ENCODE measurements at regions of chr20 and their contacts with region 1.

Region 1: GRCh38 chr20:3051385-3052019 is 5.7 kb downstream of the MRPS26 start:
- DNase-seq: no peak

Region 2: GRCh38 chr20:2697768-2698167 is 353.7 kb before region 1 on chr20:
- intact Hi-C with region 1: no loop called
- DNase-seq: no peak

Region 3: DNA sequence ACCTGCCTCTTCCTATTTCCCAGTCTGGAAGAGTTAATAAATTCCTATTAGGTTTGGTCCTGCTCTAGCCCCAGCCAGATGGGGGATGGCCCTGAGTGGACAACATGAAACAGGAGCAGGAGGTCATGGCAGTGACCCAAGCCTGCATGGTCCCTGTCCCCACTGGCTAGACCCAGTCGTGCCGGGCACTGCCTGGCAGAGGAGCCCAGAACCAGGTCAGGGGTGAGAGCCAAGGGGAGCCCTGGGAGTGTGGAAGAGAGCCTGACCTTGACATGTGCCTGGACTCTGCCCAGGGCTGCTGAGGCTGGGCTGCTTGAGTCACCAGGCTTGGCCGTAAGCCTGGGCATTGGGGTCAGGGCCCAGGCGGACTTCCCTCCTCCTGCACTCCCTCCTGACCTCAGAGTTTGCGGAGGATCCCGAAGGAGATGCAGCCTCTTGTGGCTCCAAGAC is 29.5 kb after region 1 on chr20:
- intact Hi-C with region 1: no loop called
- DNase-seq: peak; percentile 81

Region 4: GRCh38 chr20:3115190-3116107 is 63.9 kb after region 1 on chr20:
- intact Hi-C with region 1: loop called (anchors 5 kb)
- DNase-seq: no peak